Posterior cingulate gyrus (tissue), 11 donors: ENCODE measurements at regions of chr5 and their contacts with region 1.

Region 1: GRCh38 chr5:169302491-169303118 is 1.7 kb upstream of the SLIT3 start:
- DNase-seq: peak; percentile 47 to 97 (median 80)

Region 2: GRCh38 chr5:168706655-168707069 is 595.9 kb before region 1 on chr5:
- intact Hi-C with region 1: loop called (anchors 2 kb)
- DNase-seq: peak in 9 of 10 donors; percentile 32 to 94 (median 64)

Region 3: DNA sequence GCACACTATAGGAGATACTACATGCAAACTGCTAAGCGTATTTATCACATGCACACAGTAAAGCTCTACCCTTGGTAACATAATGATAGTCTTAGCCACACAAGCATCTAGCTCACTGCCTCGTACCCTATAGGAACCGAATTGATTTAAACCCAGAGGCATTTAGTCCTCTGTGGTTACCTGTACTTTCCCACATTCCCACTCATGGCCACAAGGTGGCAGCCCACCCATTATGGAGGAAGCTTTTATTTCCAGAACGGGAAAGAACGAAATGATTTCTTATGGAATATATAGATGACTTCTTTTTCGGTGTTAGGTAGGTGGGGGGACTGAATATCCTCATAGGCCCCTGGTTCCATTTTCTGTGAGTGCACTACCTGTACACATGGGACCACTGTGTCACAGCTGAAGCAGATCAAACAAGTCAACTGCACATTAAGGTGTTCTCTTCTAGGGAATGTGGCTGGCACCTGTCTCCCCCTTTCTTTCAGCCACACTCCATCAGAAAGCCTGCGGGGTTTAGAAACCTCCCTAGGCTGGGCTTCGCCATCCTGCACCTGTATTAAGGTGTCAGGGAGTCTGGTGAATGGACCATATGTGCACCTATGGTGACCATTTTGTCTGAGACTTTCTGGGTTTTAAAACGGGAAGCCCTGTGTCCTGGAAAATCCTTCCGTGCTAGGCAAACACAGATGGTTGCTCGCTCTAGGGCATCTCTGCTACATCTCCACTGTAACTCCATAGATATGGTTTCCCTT is 314.9 kb before region 1 on chr5:
- intact Hi-C with region 1: loop called (anchors 1 kb)
- DNase-seq: peak; percentile 54 to 96 (median 80)

Region 4: DNA sequence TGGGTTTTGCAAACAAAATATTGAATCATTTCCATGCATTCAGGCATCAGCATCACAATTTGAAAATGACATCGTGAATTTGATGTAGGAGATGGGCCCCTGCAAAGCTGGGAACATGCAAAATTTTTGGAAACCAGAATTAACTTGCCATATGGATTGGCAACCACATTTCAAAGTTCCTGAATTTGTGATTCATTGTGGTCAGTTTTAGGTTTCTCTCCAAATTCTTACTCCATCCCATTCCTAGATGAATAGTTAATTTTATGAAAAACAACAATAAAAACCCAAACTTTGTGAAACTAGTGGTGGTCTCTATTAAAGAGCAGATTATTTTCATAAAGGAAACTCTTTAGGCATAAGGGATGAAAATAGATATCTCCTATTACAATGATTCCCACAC is 106.1 kb after region 1 on chr5:
- intact Hi-C with region 1: no loop called
- DNase-seq: no peak